ENCODE measurements at regions of chr5 and their contacts with region 1.

Region 1: GRCh38 chr5:157603333-157604190 is 28.0 kb upstream of the ADAM19 start:
- DNase-seq: peak; percentile 50
- H3K4me3 ChIP-seq: no peak overlapping the region
- H3K27ac ChIP-seq: peak overlapping the region; percentile 20
- H3K4me1 ChIP-seq: peaks cover 18% of the 10 kb centered on the region
- H3K27me3 ChIP-seq: no peaks in the 10 kb centered on the region
- CTCF ChIP-seq: no peak
- POLR2A ChIP-seq: no peak

Region 2: DNA sequence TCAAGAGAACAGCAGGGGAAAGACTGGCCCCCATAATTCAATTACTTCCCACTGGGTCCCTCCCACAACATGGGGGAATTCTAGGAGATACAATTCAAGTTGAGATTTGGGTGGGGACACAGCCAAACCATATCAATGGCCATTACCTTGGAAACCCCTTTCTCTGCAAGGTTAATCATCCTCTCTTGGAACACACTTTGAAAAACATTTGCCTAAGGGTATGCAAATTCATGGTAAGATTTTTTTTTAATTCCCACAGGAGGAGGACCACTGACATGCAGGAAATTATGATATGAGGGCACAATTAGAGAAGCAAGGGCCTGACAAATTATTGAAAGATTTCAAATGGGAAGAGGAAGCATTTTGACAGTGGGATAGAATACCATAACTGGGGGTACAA is 205.3 kb before region 1 on chr5:
- CTCF ChIA-PET with region 1: no interaction called
- POLR2A ChIA-PET with region 1: no interaction called
- dilution Hi-C with region 1: no loop called
- intact Hi-C with region 1: no loop called
- DNase-seq: no peak
- H3K4me3 ChIP-seq: no peak overlapping the region
- H3K27ac ChIP-seq: no peak overlapping the region
- H3K4me1 ChIP-seq: no peaks in the 10 kb centered on the region
- H3K27me3 ChIP-seq: no peaks in the 10 kb centered on the region
- CTCF ChIP-seq: no peak
- POLR2A ChIP-seq: no peak

Region 3: GRCh38 chr5:157592594-157592993 is 11.0 kb before region 1 on chr5:
- CTCF ChIA-PET with region 1: interaction called, 3 read pairs
- POLR2A ChIA-PET with region 1: no interaction called
- dilution Hi-C with region 1: no loop called
- intact Hi-C with region 1: loop called (anchors 1 kb)
- DNase-seq: peak; percentile 75
- H3K4me3 ChIP-seq: peak overlapping the region in 1 of 3 experiments; percentile 39
- H3K27ac ChIP-seq: peak overlapping the region; percentile 90
- H3K4me1 ChIP-seq: peaks cover 37% of the 10 kb centered on the region
- H3K27me3 ChIP-seq: no peaks in the 10 kb centered on the region
- CTCF ChIP-seq: no peak
- POLR2A ChIP-seq: peak; percentile 48

Region 4: DNA sequence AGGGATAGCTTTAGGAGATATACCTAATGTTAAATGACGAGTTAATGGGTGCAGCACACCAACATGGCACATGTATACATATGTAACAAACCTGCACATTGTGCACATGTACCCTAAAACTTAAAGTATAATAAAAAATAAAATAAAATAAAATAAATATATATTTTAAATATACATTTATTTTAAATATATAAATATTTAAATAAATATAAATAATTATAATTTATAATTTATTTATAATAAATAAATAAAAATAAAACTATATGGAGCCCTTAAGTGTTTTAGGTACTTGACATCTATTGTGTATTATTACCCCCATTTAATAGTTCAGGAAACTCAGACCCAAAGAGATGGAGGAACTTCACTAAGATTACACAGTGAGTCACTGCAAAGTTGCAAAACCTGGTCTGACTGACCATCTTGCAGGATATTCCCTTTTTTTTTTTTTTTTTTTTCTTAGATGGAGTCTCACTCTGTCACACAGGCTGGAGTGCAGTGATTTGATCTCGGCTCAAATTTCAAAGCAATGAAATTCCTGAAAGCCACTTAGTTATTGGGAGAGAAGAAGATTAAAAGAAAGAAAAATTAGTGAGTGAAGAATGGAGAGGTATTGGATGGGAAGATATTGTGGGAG is 62.0 kb after region 1 on chr5:
- CTCF ChIA-PET with region 1: no interaction called
- POLR2A ChIA-PET with region 1: no interaction called
- dilution Hi-C with region 1: no loop called
- intact Hi-C with region 1: loop called (anchors 5 kb)
- DNase-seq: no peak
- H3K4me3 ChIP-seq: no peak overlapping the region
- H3K27ac ChIP-seq: no peak overlapping the region
- H3K4me1 ChIP-seq: peaks cover 3% of the 10 kb centered on the region
- H3K27me3 ChIP-seq: peaks cover 0 to 2% of the 10 kb centered on the region in 2 experiments
- CTCF ChIP-seq: no peak
- POLR2A ChIP-seq: no peak